Activated B cell treated with CpG ODN at 0.5 μM for 24 hours (primary cell): ENCODE measurements at regions of chr3 and their contacts with region 1.

Region 1: DNA sequence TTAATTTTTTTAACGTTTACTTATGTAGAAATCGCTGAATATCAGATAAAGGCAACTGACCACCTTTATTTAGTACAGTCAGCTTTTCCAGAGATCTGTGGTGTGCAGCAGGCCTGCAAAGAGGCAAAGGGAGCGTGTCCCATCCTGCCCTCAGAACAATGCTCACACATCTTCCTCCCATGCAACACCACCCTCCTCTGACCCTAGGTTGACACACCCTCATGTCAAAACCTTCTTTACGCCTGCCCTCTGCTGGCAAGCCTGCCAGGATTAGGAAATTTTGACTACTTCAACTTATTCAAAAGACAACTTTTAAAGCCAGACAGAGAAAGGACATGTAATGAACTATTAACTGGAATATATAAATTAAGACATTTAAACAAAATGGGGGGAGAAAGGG is 513.7 kb downstream of the FOXP1 start:
- DNase-seq: no peak
- ATAC-seq: peak; percentile 44
- H3K4me3 Mint-ChIP-seq: peak overlapping the region; percentile 36
- H3K27ac Mint-ChIP-seq: peak overlapping the region; percentile 79
- H3K4me1 Mint-ChIP-seq: peaks cover 89% of the 10 kb centered on the region
- H3K27me3 Mint-ChIP-seq: no peaks in the 10 kb centered on the region
- CTCF ChIP-seq: no peak

Region 2: GRCh38 chr3:70531063-70531657 is 538.6 kb before region 1 on chr3:
- CTCF ChIA-PET with region 1: no interaction called
- POLR2A ChIA-PET with region 1: no interaction called
- intact Hi-C with region 1: loop called (anchors 5 kb)
- DNase-seq: no peak
- ATAC-seq: no peak
- H3K4me3 Mint-ChIP-seq: no peak overlapping the region
- H3K27ac Mint-ChIP-seq: no peak overlapping the region
- H3K4me1 Mint-ChIP-seq: no peaks in the 10 kb centered on the region
- H3K27me3 Mint-ChIP-seq: no peaks in the 10 kb centered on the region
- CTCF ChIP-seq: no peak

Region 3: DNA sequence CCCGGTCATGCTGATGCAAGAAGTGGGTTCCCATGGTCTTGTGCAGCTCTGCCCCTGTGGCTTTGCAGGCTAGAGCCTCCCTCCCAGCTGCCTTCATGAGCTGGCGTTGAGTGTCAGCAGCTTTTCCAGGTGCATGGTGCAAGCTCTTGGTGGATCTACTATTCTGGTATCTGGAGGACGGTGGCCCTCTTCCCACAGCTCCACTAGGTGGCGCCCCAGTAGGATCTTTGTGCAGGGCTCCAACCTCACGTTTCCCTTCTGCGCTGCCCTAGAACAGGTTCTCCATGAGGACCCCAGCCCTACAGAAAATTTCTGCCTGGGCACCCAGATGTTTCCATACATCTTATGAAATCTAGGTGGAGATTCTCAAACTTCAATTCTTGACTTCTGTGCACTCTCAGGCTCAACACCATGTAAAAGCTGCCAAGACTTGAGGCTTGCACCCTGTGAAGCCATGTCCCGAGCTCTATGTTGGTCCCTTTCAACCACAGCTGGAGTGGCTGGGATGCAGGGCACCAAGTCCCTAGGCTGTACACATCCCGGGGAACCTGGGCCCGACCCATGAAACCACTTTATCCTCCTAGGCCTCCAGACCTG is 519.0 kb before region 1 on chr3:
- CTCF ChIA-PET with region 1: no interaction called
- POLR2A ChIA-PET with region 1: no interaction called
- intact Hi-C with region 1: loop called (anchors 1 kb)
- DNase-seq: peak; percentile 61
- ATAC-seq: peak; percentile 75
- H3K4me3 Mint-ChIP-seq: no peak overlapping the region
- H3K27ac Mint-ChIP-seq: no peak overlapping the region
- H3K4me1 Mint-ChIP-seq: no peaks in the 10 kb centered on the region
- H3K27me3 Mint-ChIP-seq: peaks cover 4% of the 10 kb centered on the region
- CTCF ChIP-seq: no peak

Region 4: DNA sequence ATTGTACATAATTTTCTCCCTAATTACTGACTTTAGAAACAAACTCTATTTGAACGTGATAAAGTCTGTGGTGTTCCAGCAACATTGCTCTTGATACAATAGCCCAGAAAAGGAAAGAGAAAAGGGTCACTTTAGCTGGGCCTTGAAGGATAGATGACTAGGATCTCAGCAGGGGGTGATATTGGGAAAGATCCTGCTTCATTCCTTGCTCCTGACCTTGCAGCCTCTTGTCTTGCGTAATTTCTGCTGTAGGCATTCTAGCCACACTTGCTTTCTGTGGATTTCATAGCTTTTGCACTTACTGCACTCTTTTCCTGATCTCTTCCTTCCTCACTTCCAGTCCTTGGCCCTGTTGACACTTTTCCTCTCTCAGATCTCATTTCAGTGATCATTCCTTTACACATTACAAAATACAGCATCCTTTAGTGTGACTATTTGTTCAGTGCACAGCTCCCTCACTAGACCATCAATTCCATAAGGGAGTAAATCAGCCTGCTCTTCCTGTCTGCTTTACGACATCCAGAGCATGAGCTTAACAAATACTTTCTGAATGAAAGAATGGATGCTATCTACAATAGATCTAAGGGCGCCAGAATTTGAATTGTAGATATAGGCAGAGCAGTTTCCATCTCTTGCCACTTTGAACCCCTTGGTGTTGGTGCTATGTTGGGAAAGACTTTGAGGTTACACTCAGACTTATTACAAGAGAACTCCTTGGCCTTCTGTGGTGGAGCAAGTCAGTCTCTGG is 197.7 kb before region 1 on chr3:
- CTCF ChIA-PET with region 1: no interaction called
- POLR2A ChIA-PET with region 1: no interaction called
- intact Hi-C with region 1: no loop called
- DNase-seq: no peak
- ATAC-seq: no peak
- H3K4me3 Mint-ChIP-seq: no peak overlapping the region
- H3K27ac Mint-ChIP-seq: no peak overlapping the region
- H3K4me1 Mint-ChIP-seq: no peaks in the 10 kb centered on the region
- H3K27me3 Mint-ChIP-seq: peaks cover 8% of the 10 kb centered on the region
- CTCF ChIP-seq: no peak

Region 5: GRCh38 chr3:71080517-71081083 is 10.8 kb after region 1 on chr3:
- CTCF ChIA-PET with region 1: interaction called, 7 read pairs
- POLR2A ChIA-PET with region 1: interaction called, 785 read pairs
- intact Hi-C with region 1: loop called (anchors 1 kb)
- DNase-seq: no peak
- ATAC-seq: no peak
- H3K4me3 Mint-ChIP-seq: peak overlapping the region; percentile 57
- H3K27ac Mint-ChIP-seq: peak overlapping the region; percentile 74
- H3K4me1 Mint-ChIP-seq: peaks cover 93% of the 10 kb centered on the region
- H3K27me3 Mint-ChIP-seq: no peaks in the 10 kb centered on the region
- CTCF ChIP-seq: no peak

Region 6: GRCh38 chr3:72163809-72164634 is 1094.2 kb after region 1 on chr3:
- CTCF ChIA-PET with region 1: no interaction called
- POLR2A ChIA-PET with region 1: no interaction called
- intact Hi-C with region 1: loop called (anchors 5 kb)
- DNase-seq: peak; percentile 53
- ATAC-seq: peak; percentile 87
- H3K4me3 Mint-ChIP-seq: peak overlapping the region; percentile 64
- H3K27ac Mint-ChIP-seq: peak overlapping the region; percentile 81
- H3K4me1 Mint-ChIP-seq: peaks cover 52% of the 10 kb centered on the region
- H3K27me3 Mint-ChIP-seq: peaks cover 2% of the 10 kb centered on the region
- CTCF ChIP-seq: no peak